Heart left ventricle (tissue), 16 donors: ENCODE measurements at regions of chr2 and their contacts with region 1.

Region 1: GRCh38 chr2:197279997-197280746 is 30.4 kb downstream of the ANKRD44 start:
- DNase-seq: no peak
- ATAC-seq: peak; percentile 24 to 57 (median 38)
- H3K4me3 ChIP-seq: peak overlapping the region in 3 of 12 donors; percentile 1 to 14 (median 10)
- H3K27ac ChIP-seq: peak overlapping the region in 1 of 12 donors; percentile 61
- H3K4me1 ChIP-seq: peaks cover 0 to 60% (median 15%) of the 10 kb centered on the region in 12 donors
- H3K27me3 ChIP-seq: no peaks in the 10 kb centered on the region
- CTCF ChIP-seq: no peak
- POLR2A ChIP-seq: no peak

Region 2: GRCh38 chr2:197606180-197606579 is 326.0 kb after region 1 on chr2:
- intact Hi-C with region 1: loop called in 1 of 10 experiments (anchors 10 kb)
- DNase-seq: no peak
- ATAC-seq: no peak
- H3K4me3 ChIP-seq: no peak overlapping the region
- H3K27ac ChIP-seq: no peak overlapping the region
- H3K4me1 ChIP-seq: no peaks in the 10 kb centered on the region
- H3K27me3 ChIP-seq: no peaks in the 10 kb centered on the region
- CTCF ChIP-seq: no peak
- POLR2A ChIP-seq: no peak

Region 3: GRCh38 chr2:197657562-197657961 is 377.4 kb after region 1 on chr2:
- intact Hi-C with region 1: no loop called
- DNase-seq: no peak
- ATAC-seq: no peak
- H3K4me3 ChIP-seq: no peak overlapping the region
- H3K27ac ChIP-seq: no peak overlapping the region
- H3K4me1 ChIP-seq: no peaks in the 10 kb centered on the region
- H3K27me3 ChIP-seq: no peaks in the 10 kb centered on the region
- CTCF ChIP-seq: no peak
- POLR2A ChIP-seq: no peak